SK-N-SH (cell line): ENCODE measurements at regions of chr1 and their contacts with region 1.

Region 1: DNA sequence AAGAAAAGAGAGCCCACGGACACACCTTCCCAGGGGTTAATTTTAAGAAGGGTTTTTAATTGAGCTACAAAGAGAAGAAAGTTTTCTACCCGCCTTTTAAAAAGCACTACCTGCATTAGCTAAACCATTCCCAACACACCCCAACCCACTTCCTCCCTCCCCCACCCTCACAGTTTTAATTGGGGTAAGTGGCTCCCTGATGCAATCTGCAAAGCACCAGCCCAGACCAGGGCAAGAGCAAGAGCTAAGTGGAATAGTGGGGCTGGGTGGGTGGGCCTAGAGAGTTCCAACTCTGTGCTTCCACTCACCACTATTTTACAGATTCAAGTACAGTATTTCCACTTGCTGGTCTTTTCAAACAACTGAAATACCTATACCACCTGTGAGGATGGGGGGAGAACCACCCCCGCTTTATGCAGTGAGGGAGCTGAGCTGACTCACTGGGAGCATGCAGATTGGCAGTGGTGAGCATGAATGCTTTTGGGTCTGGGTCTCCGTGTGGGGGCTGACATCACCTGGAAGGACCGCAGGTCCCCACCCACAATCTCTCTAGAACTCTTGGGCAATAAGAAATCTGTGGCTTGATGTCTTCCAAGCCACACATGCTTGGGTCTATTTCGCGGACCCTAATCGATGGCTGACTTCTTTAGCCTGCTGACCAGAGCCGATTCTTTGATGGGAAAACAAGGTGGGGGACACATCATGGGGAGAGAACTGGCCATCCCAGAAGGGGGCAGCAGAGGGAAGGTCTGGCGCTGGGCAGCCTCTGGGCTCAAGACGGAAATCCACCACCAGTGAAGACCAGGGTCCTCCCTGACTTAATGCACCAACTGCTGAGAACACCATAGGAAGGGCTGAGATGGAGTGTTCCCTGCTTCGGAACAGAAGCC is 95.5 kb downstream of the SSBP3 start:
- DNase-seq: peak; percentile 65
- H3K4me3 ChIP-seq: no peak overlapping the region
- H3K27ac ChIP-seq: peak overlapping the region in 1 of 2 experiments; percentile 29; a peak in 1 of 4 replicates
- H3K4me1 ChIP-seq: peaks cover 8 to 75% of the 10 kb centered on the region in 2 experiments; a peak in 3 of 4 replicates
- H3K27me3 ChIP-seq: no peaks in the 10 kb centered on the region
- CTCF ChIP-seq: peak; percentile 58
- EP300 ChIP-seq: no peak
- RAD21 ChIP-seq: peak; percentile 70

Region 2: DNA sequence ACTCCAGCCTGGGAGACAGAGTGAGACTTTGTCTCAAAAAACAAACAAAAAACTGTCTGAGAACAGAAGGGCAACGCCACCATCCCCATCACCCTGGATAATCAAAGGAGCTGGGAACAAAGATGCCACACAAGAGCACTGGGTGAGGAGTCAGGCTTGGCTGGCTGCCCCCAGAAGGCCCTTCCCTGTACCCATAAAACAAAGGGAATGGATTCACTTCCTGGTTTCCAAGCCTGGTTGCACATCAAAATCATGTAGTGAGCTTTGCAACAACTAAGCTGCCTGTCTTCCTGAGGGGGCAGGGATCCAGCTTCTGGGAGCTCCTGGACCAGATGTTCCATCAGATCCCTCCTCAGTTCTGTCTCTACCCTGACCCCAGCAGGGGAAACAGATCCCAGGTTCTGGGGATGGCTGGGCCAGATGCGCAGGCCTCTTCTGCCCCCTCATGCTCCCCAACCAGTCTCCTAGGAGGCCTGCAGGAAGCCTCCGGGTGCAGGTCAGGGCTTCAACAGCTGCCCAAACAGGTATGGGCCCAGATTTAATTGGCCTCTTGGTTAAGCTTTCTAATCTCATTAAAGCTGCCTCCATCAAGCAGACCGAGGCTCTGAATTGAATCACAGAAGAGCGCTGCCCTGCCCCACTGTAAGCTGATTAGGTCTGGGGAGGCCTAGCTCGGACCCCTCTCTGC is 12.9 kb before region 1 on chr1:
- CTCF ChIA-PET with region 1: interaction called, 42 read pairs
- POLR2A ChIA-PET with region 1: interaction called, 3 read pairs
- DNase-seq: peak; percentile 80
- H3K4me3 ChIP-seq: no peak overlapping the region
- H3K27ac ChIP-seq: peak overlapping the region in 1 of 2 experiments; percentile 96; a peak in 2 of 4 replicates
- H3K4me1 ChIP-seq: peaks cover 0 to 75% of the 10 kb centered on the region in 2 experiments; a peak in 2 of 4 replicates
- H3K27me3 ChIP-seq: no peaks in the 10 kb centered on the region
- CTCF ChIP-seq: no peak
- EP300 ChIP-seq: 0 out of 4 replicates have a peak, but pooled peaks of 1 of the 2 experiments have one; percentile 56
- RAD21 ChIP-seq: peak; percentile 45

Region 3: DNA sequence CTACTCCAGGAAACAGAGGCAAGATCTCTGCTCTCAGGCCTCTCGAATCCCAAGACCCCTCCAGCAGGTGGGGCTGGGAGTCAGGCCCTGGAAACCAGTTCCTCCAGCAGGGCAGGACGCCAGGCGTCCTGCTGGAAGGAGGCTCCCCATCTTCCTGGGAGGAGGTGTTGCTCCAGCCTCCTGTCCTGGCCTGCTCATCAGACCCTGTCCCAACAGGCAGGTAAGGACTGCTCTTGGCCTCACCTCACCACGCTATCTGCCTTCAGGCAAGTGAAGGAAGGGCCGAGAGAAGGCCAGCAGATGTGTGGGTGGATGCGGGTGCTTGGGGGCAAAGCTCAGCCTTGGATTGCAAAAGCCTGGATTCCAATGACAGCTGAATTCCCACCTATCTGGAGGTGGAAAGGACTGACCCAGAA is 12.6 kb after region 1 on chr1:
- CTCF ChIA-PET with region 1: interaction called, 14 read pairs
- POLR2A ChIA-PET with region 1: no interaction called
- DNase-seq: no peak
- H3K4me3 ChIP-seq: no peak overlapping the region
- H3K27ac ChIP-seq: peak overlapping the region in 1 of 2 experiments; percentile 96; a peak in 1 of 4 replicates
- H3K4me1 ChIP-seq: peaks cover 33 to 75% of the 10 kb centered on the region in 2 experiments
- H3K27me3 ChIP-seq: no peaks in the 10 kb centered on the region
- CTCF ChIP-seq: no peak
- EP300 ChIP-seq: no peak
- RAD21 ChIP-seq: peak; percentile 40; the same call in 1 of the 2 replicates

Region 4: GRCh38 chr1:54336116-54336515 is 25.4 kb after region 1 on chr1:
- CTCF ChIA-PET with region 1: no interaction called
- POLR2A ChIA-PET with region 1: no interaction called
- DNase-seq: no peak
- H3K4me3 ChIP-seq: no peak overlapping the region
- H3K27ac ChIP-seq: peak overlapping the region; percentile 44 to 67; a peak in 3 of 4 replicates
- H3K4me1 ChIP-seq: peaks cover 21 to 73% of the 10 kb centered on the region in 2 experiments
- H3K27me3 ChIP-seq: no peaks in the 10 kb centered on the region
- CTCF ChIP-seq: no peak
- EP300 ChIP-seq: no peak
- RAD21 ChIP-seq: no peak